WTC11 (cell line): ENCODE measurements at regions of chr22 and their contacts with region 1.

Region 1: DNA sequence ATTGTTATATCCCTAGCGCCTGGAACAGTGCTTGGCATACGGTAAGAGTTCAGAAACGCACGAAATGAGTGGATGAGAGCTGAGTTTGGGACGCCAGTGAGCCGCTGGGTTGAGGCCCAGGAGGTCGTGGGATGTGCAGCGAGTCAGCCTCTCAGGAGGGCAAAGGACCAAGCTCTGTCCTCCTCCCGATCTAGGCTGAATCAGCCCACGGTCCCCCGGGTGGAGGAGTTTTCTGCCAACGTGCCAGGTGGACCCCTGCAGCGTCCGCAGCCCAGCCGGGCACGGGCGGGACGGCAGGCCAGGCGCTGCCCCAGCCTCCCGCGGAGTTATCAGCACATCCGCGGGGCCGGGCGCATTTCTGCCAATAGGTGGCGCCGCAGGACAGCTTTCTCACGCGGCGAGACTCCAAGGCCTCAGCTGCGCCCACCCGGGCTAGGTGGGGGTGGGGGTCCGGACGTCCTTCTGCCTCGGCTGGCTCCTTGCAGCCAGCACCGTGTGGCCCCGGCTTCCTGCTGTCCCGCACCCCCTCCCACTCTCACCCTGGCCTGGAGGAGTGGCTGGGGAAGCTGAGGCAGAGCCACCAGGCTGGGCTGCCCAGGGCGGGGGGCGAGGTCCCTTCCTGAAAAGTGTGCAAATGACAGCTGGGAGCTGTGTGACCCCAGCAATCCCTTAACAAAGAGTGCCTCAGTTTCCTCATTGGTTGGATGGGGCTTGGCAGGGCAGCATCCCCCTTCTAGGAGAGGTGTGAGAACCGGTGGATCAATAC is 2.2 kb upstream of the RPS19BP1 start:
- DNase-seq: peak; percentile 96
- ATAC-seq: peak; percentile 12
- H3K4me3 Mint-ChIP-seq: peak overlapping the region; percentile 56
- H3K27ac Mint-ChIP-seq: peak overlapping the region; percentile 75
- H3K4me1 Mint-ChIP-seq: peaks cover 55% of the 10 kb centered on the region
- H3K27me3 Mint-ChIP-seq: no peaks in the 10 kb centered on the region
- CTCF ChIP-seq: peak; percentile 94

Region 2: GRCh38 chr22:39439170-39439569 is 95.6 kb before region 1 on chr22:
- CTCF ChIA-PET with region 1: no interaction called
- POLR2A ChIA-PET with region 1: no interaction called
- DNase-seq: no peak
- ATAC-seq: no peak
- H3K4me3 Mint-ChIP-seq: no peak overlapping the region
- H3K27ac Mint-ChIP-seq: no peak overlapping the region
- H3K4me1 Mint-ChIP-seq: peaks cover 14% of the 10 kb centered on the region
- H3K27me3 Mint-ChIP-seq: no peaks in the 10 kb centered on the region
- CTCF ChIP-seq: no peak

Region 3: GRCh38 chr22:39502109-39502788 is 32.5 kb before region 1 on chr22 and contains the start of gene MIEF1:
- CTCF ChIA-PET with region 1: interaction called, 45 read pairs
- POLR2A ChIA-PET with region 1: no interaction called
- DNase-seq: peak; percentile 96
- ATAC-seq: peak; percentile 97
- H3K4me3 Mint-ChIP-seq: peak within 1 kb of the TSS; percentile 97
- H3K27ac Mint-ChIP-seq: peak within 1 kb of the TSS; percentile 97
- H3K4me1 Mint-ChIP-seq: peaks cover 13% of the 10 kb centered on the region
- H3K27me3 Mint-ChIP-seq: peaks cover 89% of the 10 kb centered on the region
- CTCF ChIP-seq: no peak
- total RNA-seq, gene MIEF1: 31.5 to 38.7 TPM (median 31.9 TPM) in 3 replicates

Region 4: GRCh38 chr22:39559454-39560105 is 24.8 kb after region 1 on chr22:
- CTCF ChIA-PET with region 1: interaction called, 24 read pairs
- POLR2A ChIA-PET with region 1: no interaction called
- DNase-seq: peak; percentile 82
- ATAC-seq: peak; percentile 73
- H3K4me3 Mint-ChIP-seq: no peak overlapping the region
- H3K27ac Mint-ChIP-seq: no peak overlapping the region
- H3K4me1 Mint-ChIP-seq: peaks cover 7% of the 10 kb centered on the region
- H3K27me3 Mint-ChIP-seq: peaks cover 52% of the 10 kb centered on the region
- CTCF ChIP-seq: peak; percentile 62; the same call in 1 of the 2 replicates

Region 5: DNA sequence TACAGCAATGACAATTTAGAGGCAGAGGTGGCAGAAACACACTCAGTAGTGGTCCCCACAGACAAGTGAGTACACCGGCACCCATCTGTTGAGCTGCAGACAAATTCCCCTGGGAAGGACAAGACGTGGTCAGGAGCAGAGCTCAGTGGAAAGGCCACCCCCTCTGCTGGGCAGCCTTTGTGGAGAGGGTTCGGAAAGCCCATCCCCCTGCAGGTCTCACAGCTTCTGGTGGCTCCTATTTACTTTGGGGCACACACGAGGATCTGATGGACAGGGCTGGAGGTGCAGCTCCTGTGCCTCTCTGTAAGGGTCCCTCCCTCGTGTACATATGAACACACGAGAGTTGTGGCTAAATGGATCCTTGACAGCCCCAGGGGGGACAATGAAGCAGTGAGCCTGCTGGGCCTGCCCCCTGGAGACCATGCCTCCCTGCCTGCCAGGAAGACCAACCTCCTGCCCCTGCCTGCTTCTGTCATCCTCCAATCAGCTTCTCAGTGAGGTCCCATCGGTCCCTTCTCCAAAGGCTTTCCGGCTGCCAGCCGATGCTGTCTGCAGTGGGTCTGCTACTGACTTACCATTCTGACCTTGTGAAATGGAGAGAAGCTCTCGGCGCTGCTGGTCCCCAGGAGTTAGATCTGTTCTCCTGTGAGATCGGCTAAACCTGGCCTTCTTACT is 197.2 kb after region 1 on chr22:
- CTCF ChIA-PET with region 1: interaction called, 17 read pairs
- POLR2A ChIA-PET with region 1: no interaction called
- DNase-seq: no peak
- ATAC-seq: peak; percentile 60
- H3K4me3 Mint-ChIP-seq: no peak overlapping the region
- H3K27ac Mint-ChIP-seq: no peak overlapping the region
- H3K4me1 Mint-ChIP-seq: peaks cover 15% of the 10 kb centered on the region; the same call in 1 of the 2 replicates
- H3K27me3 Mint-ChIP-seq: no peaks in the 10 kb centered on the region
- CTCF ChIP-seq: no peak

Region 6: GRCh38 chr22:39748877-39749276 is 214.1 kb after region 1 on chr22:
- CTCF ChIA-PET with region 1: interaction called, 13 read pairs
- POLR2A ChIA-PET with region 1: no interaction called
- DNase-seq: no peak
- ATAC-seq: no peak
- H3K4me3 Mint-ChIP-seq: no peak overlapping the region
- H3K27ac Mint-ChIP-seq: no peak overlapping the region
- H3K4me1 Mint-ChIP-seq: no peaks in the 10 kb centered on the region
- H3K27me3 Mint-ChIP-seq: no peaks in the 10 kb centered on the region; the same call in none of the 2 replicates
- CTCF ChIP-seq: no peak

Region 7: GRCh38 chr22:39765046-39765445 is 230.3 kb after region 1 on chr22:
- CTCF ChIA-PET with region 1: no interaction called
- POLR2A ChIA-PET with region 1: no interaction called
- DNase-seq: no peak
- ATAC-seq: no peak
- H3K4me3 Mint-ChIP-seq: no peak overlapping the region
- H3K27ac Mint-ChIP-seq: no peak overlapping the region
- H3K4me1 Mint-ChIP-seq: no peaks in the 10 kb centered on the region
- H3K27me3 Mint-ChIP-seq: peaks cover under 1% of the 10 kb centered on the region; the same call in 1 of the 2 replicates
- CTCF ChIP-seq: no peak

Region 8: DNA sequence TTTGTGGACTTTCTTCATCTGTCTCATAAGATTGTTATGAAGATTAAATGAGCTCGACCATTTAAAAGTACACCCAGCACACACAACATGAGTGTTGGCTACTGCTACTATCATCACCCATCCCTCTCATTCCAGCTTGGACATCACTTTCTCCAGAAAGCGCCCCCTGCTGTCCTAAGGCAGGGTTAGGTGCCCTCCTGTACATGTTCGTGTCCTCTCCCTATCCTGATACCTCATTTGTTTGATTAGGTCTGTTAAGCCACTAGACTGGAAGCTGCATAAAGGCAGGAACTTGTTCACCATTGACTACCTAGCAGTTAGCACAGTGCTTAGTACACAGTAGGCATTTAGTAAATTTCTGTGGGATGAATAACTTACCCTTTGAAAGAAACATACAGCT is 273.3 kb after region 1 on chr22:
- CTCF ChIA-PET with region 1: interaction called, 15 read pairs
- POLR2A ChIA-PET with region 1: no interaction called
- DNase-seq: peak; percentile 78
- ATAC-seq: peak; percentile 76
- H3K4me3 Mint-ChIP-seq: no peak overlapping the region
- H3K27ac Mint-ChIP-seq: no peak overlapping the region
- H3K4me1 Mint-ChIP-seq: peaks cover 3% of the 10 kb centered on the region; the same call in 1 of the 2 replicates
- H3K27me3 Mint-ChIP-seq: peaks cover under 1% of the 10 kb centered on the region
- CTCF ChIP-seq: peak; percentile 43

Region 9: GRCh38 chr22:40036591-40037225 is 501.9 kb after region 1 on chr22:
- CTCF ChIA-PET with region 1: interaction called, 19 read pairs
- POLR2A ChIA-PET with region 1: interaction called, 3 read pairs
- DNase-seq: peak; percentile 77
- ATAC-seq: peak; percentile 90
- H3K4me3 Mint-ChIP-seq: no peak overlapping the region
- H3K27ac Mint-ChIP-seq: no peak overlapping the region
- H3K4me1 Mint-ChIP-seq: no peaks in the 10 kb centered on the region
- H3K27me3 Mint-ChIP-seq: peaks cover 14% of the 10 kb centered on the region
- CTCF ChIP-seq: peak; percentile 57